ENCODE measurements at regions of chr11 and their contacts with region 1.

Region 1: DNA sequence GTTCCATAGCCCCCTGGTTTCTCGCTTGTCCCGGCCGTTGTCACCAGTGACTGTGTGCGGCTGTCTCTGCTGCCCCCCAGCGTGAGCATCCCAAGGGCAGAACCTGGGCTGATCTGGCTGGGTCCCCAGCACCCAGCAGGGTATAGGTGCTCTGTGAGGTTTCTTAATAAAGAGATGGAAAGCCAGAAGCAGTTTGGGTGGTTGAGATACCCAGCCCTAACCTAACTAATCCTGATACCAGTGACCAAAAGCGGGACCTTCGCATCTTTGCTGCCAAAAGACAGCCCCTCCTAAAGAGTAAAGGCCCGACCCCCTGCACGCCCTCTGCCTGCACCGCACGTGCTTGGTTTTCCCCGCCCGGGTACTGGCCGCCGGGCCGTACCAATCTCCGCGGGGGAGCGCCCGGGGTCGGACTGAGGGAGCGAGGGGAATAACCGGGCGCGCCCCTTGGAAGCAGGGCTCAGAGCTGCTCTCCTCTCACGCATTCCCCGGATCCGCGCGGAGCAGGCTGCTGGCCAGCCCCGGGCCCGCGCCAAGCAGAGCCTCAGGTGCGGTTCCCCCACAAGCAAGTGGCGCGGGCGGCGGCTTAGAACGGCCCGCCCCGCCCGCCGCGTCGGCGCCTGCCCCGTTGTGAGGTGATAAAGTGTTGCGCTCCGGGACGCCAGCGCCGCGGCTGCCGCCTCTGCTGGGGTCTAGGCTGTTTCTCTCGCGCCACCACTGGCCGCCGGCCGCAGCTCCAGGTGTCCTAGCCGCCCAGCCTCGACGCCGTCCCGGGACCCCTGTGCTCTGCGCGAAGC is at the start of gene DGAT2:
- DNase-seq: peak; percentile 50 to 83 (median 67)
- ATAC-seq: peak; percentile 91
- H3K4me3 ChIP-seq: peak within 1 kb of the TSS; percentile 54 to 71
- H3K4me3 Mint-ChIP-seq: peak within 1 kb of the TSS; percentile 80
- H3K27ac ChIP-seq: no peak within 1 kb of the TSS
- H3K27ac Mint-ChIP-seq: peak within 1 kb of the TSS; percentile 49
- H3K4me1 ChIP-seq: peaks cover 18% of the 10 kb centered on the region
- H3K4me1 Mint-ChIP-seq: peaks cover 17% of the 10 kb centered on the region
- H3K27me3 ChIP-seq: peaks cover 4 to 8% of the 10 kb centered on the region in 2 experiments
- H3K27me3 Mint-ChIP-seq: peaks cover 16% of the 10 kb centered on the region
- CTCF ChIP-seq: no peak
- total RNA-seq, gene DGAT2: not detected

Region 2: GRCh38 chr11:75721855-75722668 is 46.2 kb before region 1 on chr11:
- CTCF ChIA-PET with region 1: interaction called, 3 read pairs
- POLR2A ChIA-PET with region 1: no interaction called
- intact Hi-C with region 1: loop called in 1 of 2 experiments (anchors 1 kb)
- DNase-seq: no peak
- ATAC-seq: no peak
- H3K4me3 ChIP-seq: no peak overlapping the region
- H3K4me3 Mint-ChIP-seq: no peak overlapping the region
- H3K27ac ChIP-seq: no peak overlapping the region
- H3K27ac Mint-ChIP-seq: no peak overlapping the region
- H3K4me1 ChIP-seq: no peaks in the 10 kb centered on the region
- H3K4me1 Mint-ChIP-seq: no peaks in the 10 kb centered on the region
- H3K27me3 ChIP-seq: no peaks in the 10 kb centered on the region
- H3K27me3 Mint-ChIP-seq: no peaks in the 10 kb centered on the region
- CTCF ChIP-seq: no peak

Region 3: GRCh38 chr11:75910426-75911145 is 142.3 kb after region 1 on chr11:
- CTCF ChIA-PET with region 1: no interaction called
- POLR2A ChIA-PET with region 1: no interaction called
- intact Hi-C with region 1: no loop called
- DNase-seq: no peak
- ATAC-seq: no peak
- H3K4me3 ChIP-seq: no peak overlapping the region
- H3K4me3 Mint-ChIP-seq: no peak overlapping the region
- H3K27ac ChIP-seq: no peak overlapping the region
- H3K27ac Mint-ChIP-seq: no peak overlapping the region
- H3K4me1 ChIP-seq: no peaks in the 10 kb centered on the region
- H3K4me1 Mint-ChIP-seq: peaks cover 14% of the 10 kb centered on the region
- H3K27me3 ChIP-seq: no peaks in the 10 kb centered on the region
- H3K27me3 Mint-ChIP-seq: no peaks in the 10 kb centered on the region
- CTCF ChIP-seq: no peak

Measured in CD8-positive, alpha-beta T cell (primary cell).